ENCODE measurements at regions of chr10 and their contacts with region 1.

Region 1: DNA sequence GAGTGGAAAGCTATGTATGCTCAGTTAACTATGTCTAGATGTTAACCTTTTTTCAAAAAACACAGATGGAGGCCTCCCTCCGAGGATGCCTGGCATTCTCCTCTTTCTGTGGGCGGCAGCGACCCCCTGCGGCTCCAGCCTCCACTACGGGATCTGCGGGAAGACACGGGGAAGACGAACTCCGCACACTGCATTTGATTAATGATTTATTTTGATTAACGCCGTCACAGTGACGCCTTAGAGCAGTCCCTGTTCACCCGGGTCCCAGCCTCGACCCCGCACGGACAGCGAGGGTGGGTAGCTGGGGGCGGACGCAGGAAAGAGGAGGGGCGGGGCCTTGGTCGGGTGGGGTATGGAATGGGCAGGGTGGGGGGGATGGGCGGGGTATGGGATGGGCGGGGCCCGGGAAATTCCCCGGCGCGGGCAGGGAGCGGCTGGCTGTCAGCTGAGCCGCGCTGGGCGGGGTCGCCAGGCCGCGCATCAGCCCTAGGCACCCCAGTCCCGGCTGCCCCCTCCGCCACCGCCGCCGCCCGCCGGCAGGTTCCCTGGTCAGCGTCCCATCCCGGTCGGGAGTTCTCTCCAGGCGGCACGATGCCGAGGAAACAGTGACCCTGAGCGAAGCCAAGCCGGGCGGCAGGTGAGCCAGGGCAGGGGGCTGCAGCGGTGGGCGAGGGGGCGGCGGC is at the start of gene OPTN:
- DNase-seq: peak; percentile 87
- ATAC-seq: peak; percentile 80
- H3K4me3 Mint-ChIP-seq: peak within 1 kb of the TSS; percentile 84
- H3K27ac Mint-ChIP-seq: peak within 1 kb of the TSS; percentile 90
- H3K4me1 Mint-ChIP-seq: peaks cover 37% of the 10 kb centered on the region
- H3K27me3 Mint-ChIP-seq: no peaks in the 10 kb centered on the region
- total RNA-seq, gene OPTN: 57.4 to 67.8 TPM

Region 2: DNA sequence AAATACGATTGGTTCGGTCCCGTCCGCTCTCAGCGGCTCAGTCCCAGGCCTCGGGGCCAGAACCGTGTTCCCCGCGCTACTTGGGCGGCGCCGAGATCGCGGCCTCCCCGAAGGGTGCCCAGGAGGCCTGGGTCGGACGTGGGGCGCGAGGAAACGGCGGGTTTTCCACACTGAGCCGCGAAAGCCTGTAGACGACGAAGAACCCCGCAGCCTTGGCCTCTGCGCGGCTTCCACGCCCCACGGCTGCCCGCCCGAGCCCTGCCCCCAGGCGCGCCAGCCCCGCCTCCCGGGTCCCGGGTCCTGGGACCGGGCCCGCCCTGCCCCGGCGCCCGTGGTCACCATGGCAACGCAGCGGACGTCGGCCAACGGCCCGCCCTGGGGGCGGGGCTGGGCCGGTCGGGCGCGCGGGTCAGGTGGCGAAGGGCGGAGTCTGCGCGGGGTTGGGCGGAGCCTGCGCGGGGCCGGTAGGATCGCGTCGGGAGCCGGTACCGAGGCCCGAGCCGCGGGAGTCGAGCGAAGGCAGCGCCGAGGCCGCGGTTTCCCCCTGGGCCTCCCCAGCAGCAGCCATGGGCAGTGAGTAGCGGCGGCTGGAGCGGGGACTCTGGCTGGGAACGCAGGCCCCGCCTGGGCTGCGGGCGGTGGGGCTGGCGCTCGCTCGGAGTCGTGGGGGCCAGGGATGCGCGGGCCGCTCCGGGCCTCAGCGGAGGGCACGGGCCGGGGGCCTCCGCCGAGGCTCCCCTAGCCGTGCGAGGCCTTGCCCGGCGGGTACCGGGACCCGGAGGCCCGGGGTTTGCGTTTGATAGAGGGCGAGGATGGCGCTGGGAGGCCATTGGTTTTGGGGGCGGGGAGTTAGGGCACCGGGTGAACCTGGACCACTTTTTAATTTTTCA is 970.3 kb before region 1 on chr10 and contains the start of gene SEC61A2:
- CTCF ChIA-PET with region 1: no interaction called
- POLR2A ChIA-PET with region 1: no interaction called
- intact Hi-C with region 1: loop called in 1 of 2 experiments (anchors 10 kb)
- DNase-seq: peak; percentile 99
- ATAC-seq: peak; percentile 96
- H3K4me3 Mint-ChIP-seq: peak within 1 kb of the TSS; percentile 81
- H3K27ac Mint-ChIP-seq: peak within 1 kb of the TSS; percentile 76
- H3K4me1 Mint-ChIP-seq: peaks cover 19% of the 10 kb centered on the region
- H3K27me3 Mint-ChIP-seq: no peaks in the 10 kb centered on the region
- total RNA-seq, gene SEC61A2: 11.3 to 12.0 TPM

Region 3: DNA sequence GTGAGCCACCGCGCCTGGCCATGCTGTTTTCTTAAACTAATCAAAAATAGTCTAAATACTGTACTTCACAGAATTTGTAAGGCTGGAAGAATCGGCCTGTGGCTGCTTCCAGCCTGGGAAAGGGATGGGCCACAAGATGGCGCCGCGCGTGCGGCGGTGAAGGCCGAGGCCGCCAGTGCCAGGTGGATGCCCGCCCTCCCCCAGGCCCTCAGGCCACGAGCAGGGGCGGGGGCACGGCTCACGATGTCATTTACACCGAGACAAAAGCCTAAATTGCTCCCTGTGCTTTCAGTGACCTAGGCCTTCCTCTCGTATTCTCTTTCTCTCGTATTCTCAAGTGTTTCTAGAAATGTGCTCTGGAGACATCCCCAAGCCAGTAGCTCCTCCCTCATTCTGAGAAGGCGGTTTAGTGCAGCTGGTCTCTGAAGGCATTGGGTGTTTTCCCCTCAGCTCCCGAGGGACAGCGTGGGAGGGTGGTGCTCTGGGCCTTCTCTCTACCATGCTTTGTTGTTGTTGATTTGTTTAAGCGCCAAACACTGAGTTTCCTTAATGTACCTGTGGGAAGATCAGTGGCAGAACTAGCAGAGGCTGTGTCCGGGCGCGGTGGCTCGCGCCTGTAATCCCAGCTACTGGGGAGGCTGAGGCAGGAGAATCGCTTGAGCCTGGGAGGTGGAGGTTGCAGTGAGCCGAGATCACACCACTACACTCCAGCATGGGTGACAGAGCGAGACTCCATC is 835.4 kb before region 1 on chr10:
- CTCF ChIA-PET with region 1: no interaction called
- POLR2A ChIA-PET with region 1: no interaction called
- intact Hi-C with region 1: loop called in 1 of 2 experiments (anchors 10 kb)
- DNase-seq: peak; percentile 88
- ATAC-seq: peak; percentile 93
- H3K4me3 Mint-ChIP-seq: peak overlapping the region; percentile 42
- H3K27ac Mint-ChIP-seq: peak overlapping the region; percentile 83
- H3K4me1 Mint-ChIP-seq: peaks cover 17% of the 10 kb centered on the region
- H3K27me3 Mint-ChIP-seq: no peaks in the 10 kb centered on the region

Region 4: GRCh38 chr10:12844811-12845533 is 254.8 kb before region 1 on chr10:
- CTCF ChIA-PET with region 1: no interaction called
- POLR2A ChIA-PET with region 1: no interaction called
- intact Hi-C with region 1: no loop called
- DNase-seq: no peak
- ATAC-seq: no peak
- H3K4me3 Mint-ChIP-seq: no peak overlapping the region
- H3K27ac Mint-ChIP-seq: no peak overlapping the region
- H3K4me1 Mint-ChIP-seq: peaks cover 3% of the 10 kb centered on the region
- H3K27me3 Mint-ChIP-seq: peaks cover 11% of the 10 kb centered on the region

Region 5: GRCh38 chr10:12902135-12902572 is 197.7 kb before region 1 on chr10:
- CTCF ChIA-PET with region 1: interaction called, 6 read pairs
- POLR2A ChIA-PET with region 1: no interaction called
- intact Hi-C with region 1: loop called in 1 of 2 experiments (anchors 2 kb)
- DNase-seq: peak; percentile 72
- ATAC-seq: peak; percentile 53
- H3K4me3 Mint-ChIP-seq: no peak overlapping the region
- H3K27ac Mint-ChIP-seq: no peak overlapping the region
- H3K4me1 Mint-ChIP-seq: no peaks in the 10 kb centered on the region
- H3K27me3 Mint-ChIP-seq: peaks cover 11% of the 10 kb centered on the region

Region 6: GRCh38 chr10:13348216-13349017 is 248.6 kb after region 1 on chr10 and contains the start of gene SEPHS1:
- CTCF ChIA-PET with region 1: no interaction called
- POLR2A ChIA-PET with region 1: no interaction called
- intact Hi-C with region 1: loop called in 1 of 2 experiments (anchors 1 kb)
- DNase-seq: peak; percentile 93
- ATAC-seq: peak; percentile 77
- H3K4me3 Mint-ChIP-seq: peak within 1 kb of the TSS; percentile 87
- H3K27ac Mint-ChIP-seq: peak within 1 kb of the TSS; percentile 95
- H3K4me1 Mint-ChIP-seq: peaks cover 57% of the 10 kb centered on the region
- H3K27me3 Mint-ChIP-seq: no peaks in the 10 kb centered on the region
- total RNA-seq, gene SEPHS1: 74.5 to 74.7 TPM